K562 (cell line): ENCODE measurements at regions of chr9 and their contacts with region 1.

Region 1: DNA sequence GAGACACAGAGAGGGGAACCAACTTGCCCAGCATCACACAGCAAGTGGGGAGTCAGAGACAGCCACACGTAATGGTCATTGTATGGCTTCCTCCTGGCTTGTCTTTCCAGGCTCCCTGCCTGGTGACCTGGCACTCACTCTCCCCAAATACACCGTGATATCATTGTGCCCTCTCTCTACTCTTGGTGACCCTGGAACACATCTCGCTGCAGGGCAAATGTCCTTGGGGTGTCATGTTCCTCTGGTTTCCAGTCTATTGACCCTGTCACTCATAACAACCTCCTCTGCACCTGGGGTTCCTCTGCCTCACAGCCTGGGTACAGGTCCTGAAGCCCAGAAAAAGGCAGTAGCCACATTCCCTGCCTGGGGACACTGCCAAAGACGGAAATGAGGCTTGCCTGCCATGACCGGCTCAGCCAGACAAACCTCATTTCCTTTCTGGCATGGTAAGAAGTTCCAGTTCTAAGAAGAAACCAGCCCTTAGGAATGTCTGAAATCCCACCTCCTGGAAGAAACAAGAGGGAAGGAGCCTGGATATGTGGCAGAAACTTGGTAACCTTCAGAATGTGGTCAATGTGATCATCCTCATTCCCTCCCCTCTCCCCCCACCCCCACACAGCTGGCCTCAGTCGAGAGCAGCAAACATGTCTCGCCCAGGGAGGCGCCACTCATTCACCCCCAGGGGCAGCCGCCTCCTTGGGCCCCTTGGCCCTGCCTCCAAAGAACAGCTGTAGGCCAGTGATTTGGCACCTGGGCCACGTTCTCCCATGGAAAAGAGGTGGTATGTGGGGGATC is 30.6 kb upstream of the SMU1 start:
- DNase-seq: peak in 3 of 4 experiments; percentile 22 to 32 (median 23)
- ATAC-seq: peak; percentile 69
- H3K4me3 ChIP-seq: no peak overlapping the region
- H3K27ac ChIP-seq: no peak overlapping the region
- H3K4me1 ChIP-seq: peaks cover 3 to 6% of the 10 kb centered on the region in 2 experiments; a peak in 2 of 5 replicates
- H3K27me3 ChIP-seq: no peaks in the 10 kb centered on the region
- CTCF ChIP-seq: no peak
- EP300 ChIP-seq: no peak
- POLR2A ChIP-seq: no peak
- RAD21 ChIP-seq: no peak

Region 2: DNA sequence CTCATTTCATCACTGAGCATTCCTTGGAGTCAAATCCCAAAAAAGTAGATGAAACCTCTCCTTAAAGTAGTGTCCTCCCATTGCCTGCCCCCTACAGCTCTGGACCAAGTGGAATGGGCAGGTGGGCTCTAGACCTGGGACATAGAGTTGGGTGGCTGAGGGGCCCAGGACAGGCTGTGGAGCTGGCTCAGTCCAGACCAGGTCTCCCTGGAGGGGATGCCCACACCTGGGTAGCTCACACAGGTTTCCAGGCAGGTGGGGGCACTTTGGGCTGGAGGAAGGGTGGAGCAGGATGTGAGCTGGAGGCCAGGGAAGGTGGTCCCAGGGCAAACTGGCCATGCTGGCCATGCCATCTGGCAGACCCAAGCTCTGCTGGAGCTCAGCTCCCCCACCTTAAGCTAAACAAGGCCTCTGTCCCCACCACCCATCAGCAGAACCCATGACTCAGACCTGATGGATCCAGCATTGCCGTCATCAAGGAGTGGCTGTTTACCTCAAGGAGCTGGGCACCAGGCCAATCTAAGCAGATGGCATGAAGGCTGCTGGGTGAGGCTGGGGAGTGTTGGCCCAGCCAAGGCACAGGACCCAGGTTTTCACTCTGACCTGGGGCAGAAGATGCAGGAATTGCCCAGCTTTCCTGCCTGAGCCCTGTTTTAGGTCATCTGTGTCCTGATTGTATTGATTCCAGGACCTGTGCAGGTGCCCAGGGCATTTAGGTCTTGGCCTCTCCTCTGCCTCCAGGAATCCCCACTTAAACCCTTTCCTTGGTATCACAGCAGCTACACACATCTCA is 126.9 kb after region 1 on chr9:
- CTCF ChIA-PET with region 1: no interaction called
- POLR2A ChIA-PET with region 1: no interaction called
- in situ Hi-C with region 1: loop called (anchors 10 kb)
- intact Hi-C with region 1: no loop called
- DNase-seq: no peak
- ATAC-seq: no peak
- H3K4me3 ChIP-seq: no peak overlapping the region
- H3K27ac ChIP-seq: no peak overlapping the region
- H3K4me1 ChIP-seq: no peaks in the 10 kb centered on the region; a peak in 1 of 5 replicates
- H3K27me3 ChIP-seq: no peaks in the 10 kb centered on the region
- CTCF ChIP-seq: no peak
- EP300 ChIP-seq: no peak
- POLR2A ChIP-seq: no peak
- RAD21 ChIP-seq: no peak